ENCODE measurements at regions of chrX and their contacts with region 1.

Region 1: DNA sequence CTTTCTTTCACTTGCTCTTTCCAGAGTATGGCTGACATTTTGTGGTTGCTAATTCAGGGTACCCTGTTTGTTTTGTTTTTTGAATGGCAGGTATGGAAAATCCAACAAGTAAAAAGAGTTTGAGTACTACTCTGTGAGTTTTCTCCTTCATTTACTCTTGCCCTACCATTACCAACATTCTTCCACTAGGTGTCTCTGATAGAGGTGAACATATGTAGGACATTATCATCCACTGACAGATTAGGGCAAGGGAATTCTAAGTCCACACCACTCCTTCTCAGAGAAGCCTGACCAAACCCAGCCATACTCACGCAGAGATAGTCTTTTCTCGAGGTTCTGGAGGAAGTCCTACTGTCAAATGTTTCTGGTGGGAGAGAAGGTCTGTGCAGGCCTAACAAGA is 36.7 kb upstream of the HDAC8 start:
- DNase-seq: no peak
- H3K4me3 Mint-ChIP-seq: no peak overlapping the region
- H3K27ac Mint-ChIP-seq: no peak overlapping the region
- H3K4me1 Mint-ChIP-seq: peaks cover 14% of the 10 kb centered on the region
- H3K27me3 Mint-ChIP-seq: no peaks in the 10 kb centered on the region

Region 2: GRCh38 chrX:72663737-72664136 is 54.4 kb after region 1 on chrX:
- intact Hi-C with region 1: loop called (anchors 10 kb)
- DNase-seq: no peak
- H3K4me3 Mint-ChIP-seq: peak overlapping the region; percentile 2
- H3K27ac Mint-ChIP-seq: peak overlapping the region; percentile 51
- H3K4me1 Mint-ChIP-seq: peaks cover 16% of the 10 kb centered on the region
- H3K27me3 Mint-ChIP-seq: no peaks in the 10 kb centered on the region

Measured in activated T-helper 1 cell treated with anti-CD3 and anti-CD28 coated beads, Interleukin-12 subunit alpha, Interleukin-12 subunit beta, Interleukin-2, Interleukin-4 antibody, amounts not matched to agents 30 ng/mL and 10 ng/mL and 1 ng/mL, durations not matched to agents 14 hours and 24 hours and 36 hours (primary cell).